A549 (cell line): ENCODE measurements at regions of chr10 and their contacts with region 1.

Region 1: DNA sequence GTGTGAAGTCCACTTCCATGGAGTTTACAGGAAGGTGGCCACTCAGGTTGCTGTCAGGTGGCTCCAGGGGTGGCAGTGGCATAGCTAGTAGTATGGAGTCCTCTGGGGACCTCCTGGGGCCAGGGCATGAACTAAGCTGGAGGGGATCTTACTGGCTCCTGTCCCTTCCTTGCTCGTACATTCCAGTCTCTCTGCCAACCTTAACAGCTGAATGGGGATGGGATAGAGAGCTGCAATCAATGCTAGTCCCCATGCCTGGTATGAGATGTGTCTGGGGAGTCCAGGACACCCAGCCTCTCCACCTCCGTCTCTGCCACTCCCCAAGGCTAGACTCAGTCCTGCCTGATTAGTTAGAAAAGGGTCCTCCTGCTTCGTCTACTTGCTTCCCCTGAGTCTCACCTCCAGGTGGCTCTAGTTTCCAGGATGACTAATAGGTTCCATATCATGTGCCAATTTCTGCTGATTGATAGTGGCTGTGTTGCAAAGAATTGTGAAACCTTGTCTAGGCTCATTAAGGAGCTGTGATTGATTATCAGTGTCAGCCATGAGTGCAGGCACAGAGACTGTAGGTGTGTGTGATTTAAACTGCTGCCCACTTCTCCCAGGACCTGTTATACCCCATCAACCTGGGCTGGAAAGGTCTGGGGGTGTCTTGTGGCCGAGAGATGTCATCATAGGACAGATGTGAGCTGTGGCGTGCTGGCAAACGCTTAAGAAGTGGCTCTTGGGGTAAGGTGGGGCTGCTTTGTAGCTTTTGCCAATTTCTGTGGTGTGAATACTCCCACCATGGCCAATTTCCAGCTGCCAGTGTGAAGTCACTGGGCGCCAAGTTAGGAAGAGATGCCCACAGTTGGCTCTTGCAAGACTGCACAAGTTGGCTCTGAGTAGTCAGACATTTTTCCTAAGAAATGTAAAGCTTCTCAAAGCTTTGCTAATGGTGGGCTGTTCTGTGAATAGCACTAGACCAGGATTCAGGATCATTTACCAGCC is 59.8 kb downstream of the COL13A1 start:
- DNase-seq: peak; percentile 40 to 59
- ATAC-seq: peak; percentile 59 to 74; a peak in 5 of 6 replicates
- H3K4me3 ChIP-seq: no peak overlapping the region
- H3K27ac ChIP-seq: peak overlapping the region in 1 of 2 experiments; percentile 87; a peak in 4 of 6 replicates
- H3K4me1 ChIP-seq: peaks cover 39% of the 10 kb centered on the region
- CTCF ChIP-seq: peak; percentile 43
- EP300 ChIP-seq: no peak
- POLR2A ChIP-seq: no peak
- RAD21 ChIP-seq: peak; percentile 30 to 42; a peak in 3 of 5 replicates

Region 2: GRCh38 chr10:69831231-69831855 is 30.2 kb before region 1 on chr10:
- CTCF ChIA-PET with region 1: no interaction called
- POLR2A ChIA-PET with region 1: no interaction called
- DNase-seq: no peak
- ATAC-seq: no peak
- H3K4me3 ChIP-seq: no peak overlapping the region
- H3K27ac ChIP-seq: no peak overlapping the region
- H3K4me1 ChIP-seq: no peaks in the 10 kb centered on the region
- CTCF ChIP-seq: no peak
- EP300 ChIP-seq: no peak
- POLR2A ChIP-seq: no peak
- RAD21 ChIP-seq: no peak

Region 3: GRCh38 chr10:69901628-69902505 is 40.3 kb after region 1 on chr10:
- CTCF ChIA-PET with region 1: interaction called, 22 read pairs
- POLR2A ChIA-PET with region 1: no interaction called
- DNase-seq: peak; percentile 52 to 96
- ATAC-seq: peak; percentile 84 to 97
- H3K4me3 ChIP-seq: no peak overlapping the region
- H3K27ac ChIP-seq: peak overlapping the region in 1 of 2 experiments; percentile 40; a peak in 1 of 6 replicates
- H3K4me1 ChIP-seq: no peaks in the 10 kb centered on the region
- CTCF ChIP-seq: peak; percentile 47
- EP300 ChIP-seq: no peak
- POLR2A ChIP-seq: no peak
- RAD21 ChIP-seq: peak in 1 of 2 experiments; percentile 34; a peak in 1 of 5 replicates